A549 (cell line): ENCODE measurements at regions of chr2 and their contacts with region 1.

Region 1: DNA sequence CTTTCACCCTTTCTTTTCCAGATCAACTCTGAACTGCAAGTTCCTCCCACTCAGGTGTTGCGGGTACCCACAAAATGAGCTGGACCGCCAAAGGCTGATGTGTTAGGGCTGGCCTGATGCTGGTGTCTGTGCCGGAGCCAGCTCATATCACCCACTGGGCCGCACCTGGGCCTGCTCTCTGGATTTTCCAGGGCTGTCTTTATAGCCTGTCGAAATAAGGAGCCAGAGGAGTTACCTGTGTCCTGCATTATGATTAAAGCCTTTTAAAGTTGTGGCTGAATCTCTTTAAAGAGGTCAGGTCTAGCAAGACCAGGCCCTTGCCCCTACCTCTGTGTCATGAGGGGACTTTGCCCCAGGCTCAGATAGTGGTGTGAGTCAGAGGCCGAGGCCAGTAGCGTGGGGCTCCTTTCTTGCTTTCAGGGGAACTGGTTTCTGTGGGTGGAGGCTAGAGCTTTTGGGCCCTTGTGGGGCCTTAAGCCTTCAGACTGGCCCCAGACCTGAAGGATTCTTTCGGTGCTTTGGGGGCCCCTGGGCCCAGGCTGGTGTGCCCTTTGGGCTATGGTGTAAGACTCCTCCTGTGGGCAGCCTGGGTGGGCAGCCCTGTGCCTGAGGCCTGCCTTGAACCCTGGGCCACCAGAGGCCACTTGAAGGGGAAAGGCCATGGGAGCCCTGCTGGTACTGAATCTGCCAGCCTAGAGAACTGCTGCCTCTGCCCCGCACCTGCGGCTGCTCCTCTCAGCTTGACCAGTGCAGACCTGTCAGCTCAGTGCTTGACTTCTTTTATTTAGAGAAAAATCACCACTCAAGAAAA is 21.3 kb downstream of the OTOF start:
- DNase-seq: peak in 1 of 2 experiments; percentile 43
- ATAC-seq: peak; percentile 30 to 70; a peak in 3 of 6 replicates
- H3K4me3 ChIP-seq: no peak overlapping the region
- H3K27ac ChIP-seq: peak overlapping the region; percentile 55 to 73
- H3K4me1 ChIP-seq: peaks cover 11% of the 10 kb centered on the region
- CTCF ChIP-seq: no peak
- EP300 ChIP-seq: no peak
- POLR2A ChIP-seq: no peak
- RAD21 ChIP-seq: no peak

Region 2: DNA sequence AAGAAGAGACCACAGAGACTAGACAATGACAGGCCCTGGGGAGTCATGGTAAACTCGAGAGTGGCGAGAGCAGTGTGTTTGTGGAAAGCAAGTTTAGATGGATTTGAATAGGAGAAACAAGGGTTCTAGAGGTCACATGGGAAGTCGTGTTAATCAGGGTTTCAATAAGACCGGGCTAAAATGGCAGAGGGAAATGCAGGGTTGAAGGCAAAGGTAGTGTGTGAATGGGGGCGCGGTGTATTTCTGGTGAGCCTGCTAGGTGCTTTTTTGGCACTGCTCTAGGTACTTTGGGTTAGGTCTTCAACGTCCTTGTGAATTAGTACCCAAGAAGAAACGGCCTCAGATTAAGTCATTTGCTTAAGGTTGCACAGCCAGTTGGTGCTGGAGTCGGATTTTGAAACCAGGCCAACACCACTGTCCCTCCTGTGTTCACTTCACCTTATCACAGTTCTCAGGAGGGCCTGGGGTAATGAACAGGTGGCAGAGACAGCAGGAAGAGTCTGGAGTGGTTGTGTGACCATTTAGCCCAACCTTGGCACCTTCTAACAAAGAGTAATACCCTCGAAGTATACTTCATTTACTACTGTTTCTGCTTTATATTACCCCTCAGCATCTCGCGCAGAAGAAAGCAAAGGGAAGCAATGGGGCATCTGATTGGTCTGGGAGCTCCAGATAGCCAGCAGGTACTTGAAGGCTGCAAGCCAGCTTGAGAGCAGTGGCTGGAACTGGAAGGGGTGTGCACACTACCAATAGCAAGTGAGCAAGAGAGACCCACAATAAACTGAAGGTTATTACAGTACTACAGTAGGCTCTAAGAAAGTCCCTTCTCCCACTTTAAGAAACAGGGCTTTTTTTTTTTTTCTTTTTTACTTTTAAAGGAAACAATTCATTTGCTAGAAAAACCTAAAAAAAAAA is 317.1 kb before region 1 on chr2:
- CTCF ChIA-PET with region 1: no interaction called
- POLR2A ChIA-PET with region 1: no interaction called
- DNase-seq: peak in 1 of 2 experiments; percentile 44
- ATAC-seq: peak; percentile 28 to 42
- H3K4me3 ChIP-seq: no peak overlapping the region
- H3K27ac ChIP-seq: no peak overlapping the region; a peak in 1 of 6 replicates
- H3K4me1 ChIP-seq: peaks cover 14% of the 10 kb centered on the region
- CTCF ChIP-seq: no peak
- EP300 ChIP-seq: no peak
- POLR2A ChIP-seq: no peak
- RAD21 ChIP-seq: no peak

Region 3: DNA sequence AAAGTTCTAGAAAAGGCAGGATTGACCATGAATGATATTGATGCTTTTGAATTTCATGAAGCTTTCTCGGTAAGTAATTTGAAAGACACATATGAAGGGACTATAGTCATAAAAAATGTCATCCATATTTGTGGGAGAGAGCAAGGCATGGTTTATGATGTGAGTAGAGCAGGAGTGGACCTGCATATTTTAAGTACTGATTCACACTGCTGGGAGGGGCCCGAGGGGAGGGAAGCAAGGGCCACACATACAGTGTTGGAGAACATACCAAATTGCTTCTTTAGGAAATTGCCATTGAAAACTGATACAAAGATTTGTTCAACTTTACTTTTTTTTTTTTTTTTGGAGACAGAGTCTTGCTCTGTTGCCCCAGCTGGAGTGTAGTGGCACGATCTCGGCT is 172.5 kb before region 1 on chr2:
- CTCF ChIA-PET with region 1: no interaction called
- POLR2A ChIA-PET with region 1: no interaction called
- DNase-seq: no peak
- ATAC-seq: peak in 1 of 2 experiments; percentile 55; a peak in 1 of 6 replicates
- H3K4me3 ChIP-seq: no peak overlapping the region
- H3K27ac ChIP-seq: no peak overlapping the region
- H3K4me1 ChIP-seq: peaks cover 6% of the 10 kb centered on the region; the same call in 2 of the 3 replicates
- CTCF ChIP-seq: no peak
- EP300 ChIP-seq: no peak
- POLR2A ChIP-seq: no peak
- RAD21 ChIP-seq: no peak

Region 4: DNA sequence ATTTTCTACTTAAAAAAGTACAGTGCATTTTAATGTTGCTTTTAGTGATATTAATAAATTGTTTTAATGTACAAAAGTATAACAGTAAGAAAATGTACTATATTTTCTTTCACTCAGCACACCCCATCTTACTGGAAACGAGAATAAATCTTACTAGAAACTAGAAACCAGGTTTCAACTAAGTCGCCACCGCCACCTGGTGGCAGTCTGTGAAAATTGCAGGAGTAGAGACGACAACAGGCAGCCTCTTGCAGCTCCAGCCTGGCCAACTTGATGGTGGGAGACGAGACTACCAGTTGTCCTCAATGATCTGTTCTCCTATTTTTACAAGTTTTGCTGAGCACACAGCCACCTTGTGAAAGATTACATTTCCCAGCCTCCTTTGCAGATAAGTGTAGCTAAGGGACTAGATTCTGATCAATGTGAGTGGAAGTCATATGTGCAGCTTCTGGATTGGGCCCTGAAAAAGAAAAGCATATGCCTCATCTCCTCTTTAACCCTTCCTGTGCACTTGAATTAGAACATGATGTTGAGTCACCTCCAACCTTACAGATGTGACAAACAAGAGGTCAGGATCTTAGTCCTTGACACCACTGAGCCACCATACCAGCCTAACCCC is 12.6 kb after region 1 on chr2:
- CTCF ChIA-PET with region 1: interaction called, 15 read pairs
- POLR2A ChIA-PET with region 1: no interaction called
- DNase-seq: peak; percentile 65 to 88
- ATAC-seq: peak in 1 of 2 experiments; percentile 65; a peak in 3 of 6 replicates
- H3K4me3 ChIP-seq: no peak overlapping the region
- H3K27ac ChIP-seq: no peak overlapping the region
- H3K4me1 ChIP-seq: peaks cover 9% of the 10 kb centered on the region
- CTCF ChIP-seq: peak; percentile 88
- EP300 ChIP-seq: no peak
- POLR2A ChIP-seq: no peak
- RAD21 ChIP-seq: peak; percentile 81 to 93

Region 5: GRCh38 chr2:26493566-26493965 is 36.9 kb after region 1 on chr2:
- CTCF ChIA-PET with region 1: no interaction called
- POLR2A ChIA-PET with region 1: no interaction called
- DNase-seq: no peak
- ATAC-seq: no peak
- H3K4me3 ChIP-seq: no peak overlapping the region
- H3K27ac ChIP-seq: no peak overlapping the region
- H3K4me1 ChIP-seq: no peaks in the 10 kb centered on the region
- CTCF ChIP-seq: no peak
- EP300 ChIP-seq: no peak
- POLR2A ChIP-seq: no peak
- RAD21 ChIP-seq: no peak

Region 6: DNA sequence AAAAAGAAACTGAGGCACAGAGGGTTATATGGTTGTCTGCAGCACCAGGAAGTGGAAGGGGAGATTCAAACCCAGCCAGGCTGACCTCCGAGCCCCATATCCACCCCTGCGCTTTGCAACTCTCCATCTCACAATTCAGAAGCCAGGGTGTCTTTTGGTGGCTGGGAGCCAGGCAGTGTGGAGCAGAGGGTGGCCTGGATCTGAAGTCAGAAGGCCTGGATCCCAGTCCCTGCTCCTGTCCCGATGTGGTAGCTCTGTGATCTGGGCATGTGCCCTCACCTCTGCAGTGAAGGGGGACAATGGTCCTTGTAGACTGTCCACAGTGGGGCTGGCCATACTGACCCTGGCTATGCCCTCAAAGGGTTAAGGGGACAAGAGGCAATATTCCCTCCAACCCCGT is 127.5 kb after region 1 on chr2:
- CTCF ChIA-PET with region 1: no interaction called
- POLR2A ChIA-PET with region 1: no interaction called
- DNase-seq: no peak
- ATAC-seq: no peak
- H3K4me3 ChIP-seq: no peak overlapping the region
- H3K27ac ChIP-seq: no peak overlapping the region
- H3K4me1 ChIP-seq: no peaks in the 10 kb centered on the region
- CTCF ChIP-seq: no peak
- EP300 ChIP-seq: no peak
- POLR2A ChIP-seq: no peak
- RAD21 ChIP-seq: no peak